CD14-positive monocyte (primary cell): ENCODE measurements at regions of chr20 and their contacts with region 1.

Region 1: DNA sequence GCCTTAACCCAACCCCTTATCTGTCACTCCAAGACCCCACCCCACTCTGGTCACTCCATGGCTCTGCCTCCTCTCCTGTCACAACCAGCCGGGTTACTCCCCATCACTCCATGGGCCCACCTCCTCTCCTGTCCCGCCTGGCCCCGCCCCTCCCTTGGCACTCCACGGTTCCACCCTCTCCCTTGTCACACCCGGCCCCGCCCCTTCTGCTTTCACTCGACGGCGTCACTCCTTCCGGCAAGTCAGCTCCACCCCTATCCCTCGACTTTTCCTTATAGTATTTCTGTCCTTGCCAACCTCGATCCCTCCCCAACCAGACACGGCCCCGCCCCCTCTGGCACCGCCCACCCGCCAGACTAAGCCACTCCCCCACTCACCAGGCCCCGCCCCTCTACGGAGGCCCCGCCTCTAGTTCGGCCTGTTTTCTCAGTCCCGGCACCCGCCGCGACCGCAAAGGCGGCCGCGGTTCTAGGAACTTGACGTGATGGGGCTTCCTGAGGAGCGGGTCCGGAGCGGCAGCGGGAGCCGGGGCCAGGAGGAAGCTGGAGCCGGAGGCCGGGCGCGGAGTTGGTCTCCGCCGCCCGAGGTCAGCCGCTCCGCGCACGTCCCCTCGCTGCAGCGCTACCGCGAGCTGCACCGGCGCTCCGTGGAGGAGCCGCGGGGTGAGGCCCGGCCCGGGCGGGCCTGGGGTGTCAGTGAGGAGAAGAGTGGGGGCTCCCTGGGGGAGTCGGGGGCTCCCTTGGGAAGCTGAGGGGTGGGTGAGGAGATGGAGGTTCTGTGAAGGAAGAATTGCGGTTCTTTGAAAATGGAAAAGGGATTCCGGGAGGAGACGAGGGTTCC is at the start of gene ACSS2:
- DNase-seq: peak; percentile 96 to 100 (median 99)
- H3K4me3 ChIP-seq: peak within 1 kb of the TSS; percentile 78 to 97 (median 88)
- H3K4me3 Mint-ChIP-seq: peak within 1 kb of the TSS; percentile 100
- H3K27ac ChIP-seq: peak within 1 kb of the TSS; percentile 94 to 99
- H3K27ac Mint-ChIP-seq: peak within 1 kb of the TSS; percentile 99 to 100 (median 100)
- H3K4me1 ChIP-seq: peaks cover 50 to 51% of the 10 kb centered on the region in 2 donors
- H3K4me1 Mint-ChIP-seq: peaks cover 65% of the 10 kb centered on the region
- H3K27me3 ChIP-seq: no peaks in the 10 kb centered on the region
- H3K27me3 Mint-ChIP-seq: peaks cover 1 to 12% (median 9%) of the 10 kb centered on the region in 3 donors
- CTCF ChIP-seq: no peak
- polyA plus RNA-seq, gene ACSS2: 37.7 to 67.2 (median 48.4) TPM

Region 2: GRCh38 chr20:34824452-34824805 is 52.0 kb before region 1 on chr20:
- intact Hi-C with region 1: no loop called
- DNase-seq: peak; percentile 7 to 22 (median 8)
- H3K4me3 ChIP-seq: peak overlapping the region; percentile 93 to 97 (median 95)
- H3K4me3 Mint-ChIP-seq: peak overlapping the region; percentile 96 to 99
- H3K27ac ChIP-seq: peak overlapping the region; percentile 71 to 87
- H3K27ac Mint-ChIP-seq: peak overlapping the region; percentile 89 to 96 (median 93)
- H3K4me1 ChIP-seq: peaks cover 18 to 21% of the 10 kb centered on the region in 2 donors
- H3K4me1 Mint-ChIP-seq: peaks cover 43% of the 10 kb centered on the region
- H3K27me3 ChIP-seq: no peaks in the 10 kb centered on the region
- H3K27me3 Mint-ChIP-seq: peaks cover 0 to 5% (median 1%) of the 10 kb centered on the region in 3 donors
- CTCF ChIP-seq: no peak

Region 3: DNA sequence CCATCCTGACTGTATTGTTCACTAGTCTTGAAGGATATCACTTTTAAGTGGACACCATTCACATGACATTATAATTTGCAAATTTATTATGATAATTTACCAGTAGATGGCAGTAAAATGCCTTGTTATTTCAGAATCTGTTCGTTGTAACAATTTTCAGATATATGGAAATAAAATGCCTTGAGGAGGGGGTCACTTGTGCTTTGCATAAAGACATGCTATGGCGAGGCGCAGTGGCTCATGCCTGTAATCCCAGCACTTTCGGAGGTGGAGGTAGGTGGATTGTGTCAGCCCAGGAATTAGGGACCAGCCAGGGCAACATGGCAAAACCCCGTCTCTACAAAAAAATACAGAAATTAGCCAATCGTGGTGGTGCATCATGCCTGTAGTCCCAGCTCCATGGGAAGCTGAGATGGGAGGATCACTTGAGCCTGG is 41.9 kb before region 1 on chr20:
- intact Hi-C with region 1: loop called in 1 of 2 experiments (anchors 5 kb)
- DNase-seq: peak; percentile 20 to 54 (median 24)
- H3K4me3 ChIP-seq: no peak overlapping the region
- H3K4me3 Mint-ChIP-seq: no peak overlapping the region
- H3K27ac ChIP-seq: no peak overlapping the region
- H3K27ac Mint-ChIP-seq: peak overlapping the region in 2 of 7 donors; percentile 63 to 70
- H3K4me1 ChIP-seq: peaks cover 11% of the 10 kb centered on the region in 2 donors
- H3K4me1 Mint-ChIP-seq: peaks cover 9% of the 10 kb centered on the region
- H3K27me3 ChIP-seq: no peaks in the 10 kb centered on the region
- H3K27me3 Mint-ChIP-seq: peaks cover 2 to 5% (median 4%) of the 10 kb centered on the region in 3 donors
- CTCF ChIP-seq: peak; percentile 63

Region 4: GRCh38 chr20:34907616-34908469 is 31.5 kb after region 1 on chr20:
- intact Hi-C with region 1: loop called in 1 of 2 experiments (anchors 5 kb)
- DNase-seq: no peak
- H3K4me3 ChIP-seq: no peak overlapping the region
- H3K4me3 Mint-ChIP-seq: no peak overlapping the region
- H3K27ac ChIP-seq: peak overlapping the region in 1 of 2 donors; percentile 63
- H3K27ac Mint-ChIP-seq: peak overlapping the region in 6 of 7 donors; percentile 43 to 86 (median 66)
- H3K4me1 ChIP-seq: peaks cover 18 to 20% of the 10 kb centered on the region in 2 donors
- H3K4me1 Mint-ChIP-seq: peaks cover 40% of the 10 kb centered on the region
- H3K27me3 ChIP-seq: no peaks in the 10 kb centered on the region
- H3K27me3 Mint-ChIP-seq: peaks cover 0 to 1% (median 0%) of the 10 kb centered on the region in 3 donors
- CTCF ChIP-seq: no peak

Region 5: GRCh38 chr20:34955232-34956040 is 79.1 kb after region 1 on chr20 and contains the starts of genes GSS and MYH7B:
- intact Hi-C with region 1: loop called in 1 of 2 experiments (anchors 1 kb)
- DNase-seq: peak; percentile 95 to 96 (median 95)
- H3K4me3 ChIP-seq: peak within 1 kb of the TSS; percentile 69 to 89 (median 84)
- H3K4me3 Mint-ChIP-seq: peak within 1 kb of the TSS; percentile 97 to 99
- H3K27ac ChIP-seq: peak within 1 kb of the TSS; percentile 88 to 91
- H3K27ac Mint-ChIP-seq: peak within 1 kb of the TSS; percentile 96 to 99 (median 97)
- H3K4me1 ChIP-seq: peaks cover 13 to 14% of the 10 kb centered on the region in 2 donors
- H3K4me1 Mint-ChIP-seq: peaks cover 16% of the 10 kb centered on the region
- H3K27me3 ChIP-seq: no peaks in the 10 kb centered on the region
- H3K27me3 Mint-ChIP-seq: peaks cover 0 to 3% (median 0%) of the 10 kb centered on the region in 3 donors
- CTCF ChIP-seq: no peak
- polyA plus RNA-seq, gene GSS: 30.4 to 52.9 (median 34.0) TPM
- polyA plus RNA-seq, gene MYH7B: 0.75 TPM in 1 of 3 donors, not detected in the others

Region 6: GRCh38 chr20:35092524-35093266 is 216.3 kb after region 1 on chr20 and contains the start of gene TRPC4AP:
- intact Hi-C with region 1: loop called in 1 of 2 experiments (anchors 5 kb)
- DNase-seq: peak; percentile 86 to 89 (median 87)
- H3K4me3 ChIP-seq: peak within 1 kb of the TSS; percentile 90 to 95 (median 92)
- H3K4me3 Mint-ChIP-seq: peak within 1 kb of the TSS; percentile 91 to 94
- H3K27ac ChIP-seq: peak within 1 kb of the TSS; percentile 84 to 90
- H3K27ac Mint-ChIP-seq: peak within 1 kb of the TSS; percentile 94 to 99 (median 97)
- H3K4me1 ChIP-seq: peaks cover 43 to 56% of the 10 kb centered on the region in 2 donors
- H3K4me1 Mint-ChIP-seq: peaks cover 54% of the 10 kb centered on the region
- H3K27me3 ChIP-seq: no peaks in the 10 kb centered on the region
- H3K27me3 Mint-ChIP-seq: peaks cover 0 to 10% (median 1%) of the 10 kb centered on the region in 3 donors
- CTCF ChIP-seq: peak; percentile 98
- polyA plus RNA-seq, gene TRPC4AP: 80.8 to 98.4 (median 88.6) TPM

Region 7: DNA sequence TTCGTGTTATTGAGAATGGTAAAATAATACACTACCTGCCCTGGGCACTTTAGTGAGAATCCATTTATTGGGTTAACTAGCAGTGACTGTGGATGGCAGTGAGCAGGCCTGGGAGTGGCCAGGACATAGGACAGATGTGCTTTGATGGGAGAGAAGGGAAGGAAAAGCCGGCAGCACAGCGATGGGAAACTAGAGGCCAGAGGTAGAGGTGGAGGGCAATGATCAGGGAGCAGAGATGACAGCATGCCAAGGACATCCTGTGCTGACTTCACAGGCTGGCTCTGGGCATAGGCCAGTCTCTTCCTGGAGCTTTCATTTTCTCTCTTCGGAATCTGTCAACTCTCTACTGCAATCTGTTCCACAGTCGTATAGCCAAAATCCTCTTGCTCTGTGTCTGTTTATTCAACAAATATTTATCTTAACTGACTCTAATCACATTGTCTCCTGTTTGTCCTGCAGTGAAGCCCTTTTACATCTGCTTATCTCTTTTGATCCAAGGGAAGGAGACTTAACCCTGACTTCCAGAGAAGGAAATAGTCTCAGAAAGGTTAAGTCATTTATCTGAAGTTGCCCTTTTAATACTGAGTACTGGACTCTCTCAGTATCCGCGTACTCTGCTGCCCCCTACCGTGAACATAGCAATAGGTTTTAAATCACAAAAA is 331.7 kb after region 1 on chr20:
- intact Hi-C with region 1: loop called in 1 of 2 experiments (anchors 5 kb)
- DNase-seq: peak; percentile 58 to 71 (median 66)
- H3K4me3 ChIP-seq: no peak overlapping the region
- H3K4me3 Mint-ChIP-seq: no peak overlapping the region
- H3K27ac ChIP-seq: no peak overlapping the region
- H3K27ac Mint-ChIP-seq: no peak overlapping the region
- H3K4me1 ChIP-seq: no peaks in the 10 kb centered on the region
- H3K4me1 Mint-ChIP-seq: no peaks in the 10 kb centered on the region
- H3K27me3 ChIP-seq: no peaks in the 10 kb centered on the region
- H3K27me3 Mint-ChIP-seq: peaks cover 0 to 4% (median 0%) of the 10 kb centered on the region in 3 donors
- CTCF ChIP-seq: peak; percentile 77